Kidney (tissue), 22 donors: ENCODE measurements at regions of chr20 and their contacts with region 1.

Region 1: GRCh38 chr20:31452575-31452974 is 12.1 kb downstream of the DEFB123 start:
- DNase-seq: no peak
- H3K4me3 ChIP-seq: no peak overlapping the region
- H3K27ac ChIP-seq: no peak overlapping the region
- H3K4me1 ChIP-seq: no peaks in the 10 kb centered on the region
- H3K27me3 ChIP-seq: no peaks in the 10 kb centered on the region
- CTCF ChIP-seq: no peak

Region 2: GRCh38 chr20:31500527-31500926 is 48.0 kb after region 1 on chr20:
- intact Hi-C with region 1: loop called (anchors 5 kb)
- DNase-seq: no peak
- H3K4me3 ChIP-seq: no peak overlapping the region
- H3K27ac ChIP-seq: no peak overlapping the region
- H3K4me1 ChIP-seq: peaks cover 0 to 3% (median 0%) of the 10 kb centered on the region in 3 donors
- H3K27me3 ChIP-seq: no peaks in the 10 kb centered on the region
- CTCF ChIP-seq: no peak